Esophagus squamous epithelium (tissue), 5 donors: ENCODE measurements at regions of chr3 and their contacts with region 1.

Region 1: GRCh38 chr3:161274719-161275298 is 53.7 kb downstream of the NMD3 start:
- DNase-seq: no peak
- H3K4me3 ChIP-seq: no peak overlapping the region
- H3K27ac ChIP-seq: peak overlapping the region in 3 of 4 donors; percentile 75 to 88 (median 78)
- H3K4me1 ChIP-seq: peaks cover 0 to 41% (median 4%) of the 10 kb centered on the region in 3 donors
- H3K27me3 ChIP-seq: no peaks in the 10 kb centered on the region
- CTCF ChIP-seq: peak; percentile 20 to 69 (median 38)
- POLR2A ChIP-seq: no peak

Region 2: GRCh38 chr3:161409069-161409468 is 134.3 kb after region 1 on chr3:
- intact Hi-C with region 1: loop called (anchors 5 kb)
- DNase-seq: no peak
- H3K4me3 ChIP-seq: no peak overlapping the region
- H3K27ac ChIP-seq: no peak overlapping the region
- H3K4me1 ChIP-seq: peaks cover 0 to 39% (median 3%) of the 10 kb centered on the region in 3 donors
- H3K27me3 ChIP-seq: no peaks in the 10 kb centered on the region
- CTCF ChIP-seq: peak in 5 of 6 experiments; percentile 36 to 67 (median 51)
- POLR2A ChIP-seq: no peak